ENCODE measurements at regions of chr1 and their contacts with region 1.

Region 1: DNA sequence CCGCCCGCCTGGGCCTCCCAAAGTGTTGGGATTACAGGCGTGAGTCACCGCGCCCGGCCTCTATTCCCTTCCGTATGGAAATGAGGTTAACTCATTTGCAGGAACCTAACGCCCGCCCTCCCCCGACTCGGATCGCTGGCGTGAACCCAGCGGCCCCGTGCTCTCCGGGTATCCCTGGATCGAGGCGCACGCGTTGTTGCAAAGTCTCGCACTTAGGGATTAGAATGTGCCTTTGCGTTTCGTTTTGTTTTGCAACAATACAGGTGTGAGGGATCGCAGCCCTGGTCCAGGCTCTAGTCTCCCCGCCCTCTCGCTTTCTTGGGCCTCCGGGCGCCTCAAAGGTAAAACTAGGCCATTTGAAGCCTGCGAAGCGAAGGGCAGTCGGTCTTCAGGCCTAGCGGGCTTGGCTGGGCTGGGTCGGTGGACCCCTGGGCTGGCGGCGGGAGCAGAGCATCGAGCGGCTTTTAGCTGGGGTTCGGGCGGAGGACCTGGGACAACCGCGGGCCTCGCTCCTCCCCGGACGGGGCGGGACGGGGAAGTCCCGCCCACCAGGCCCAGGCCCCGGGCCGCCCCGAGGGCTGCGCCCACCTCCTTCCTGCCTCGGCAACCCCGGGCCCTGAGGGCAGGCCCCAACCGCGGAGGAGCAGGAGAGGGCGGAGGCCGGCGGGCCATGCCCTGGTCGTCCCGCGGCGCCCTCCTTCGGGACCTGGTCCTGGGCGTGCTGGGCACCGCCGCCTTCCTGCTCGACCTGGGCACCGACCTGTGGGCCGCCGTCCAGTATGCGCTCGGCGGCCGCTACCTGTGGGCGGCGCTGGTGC is at the start of gene XKR8:
- H3K4me3 ChIP-seq: peak within 1 kb of the TSS; percentile 77
- H3K27ac ChIP-seq: peak within 1 kb of the TSS; percentile 75
- H3K4me1 ChIP-seq: no peaks in the 10 kb centered on the region
- CTCF ChIP-seq: peak; percentile 95

Region 2: DNA sequence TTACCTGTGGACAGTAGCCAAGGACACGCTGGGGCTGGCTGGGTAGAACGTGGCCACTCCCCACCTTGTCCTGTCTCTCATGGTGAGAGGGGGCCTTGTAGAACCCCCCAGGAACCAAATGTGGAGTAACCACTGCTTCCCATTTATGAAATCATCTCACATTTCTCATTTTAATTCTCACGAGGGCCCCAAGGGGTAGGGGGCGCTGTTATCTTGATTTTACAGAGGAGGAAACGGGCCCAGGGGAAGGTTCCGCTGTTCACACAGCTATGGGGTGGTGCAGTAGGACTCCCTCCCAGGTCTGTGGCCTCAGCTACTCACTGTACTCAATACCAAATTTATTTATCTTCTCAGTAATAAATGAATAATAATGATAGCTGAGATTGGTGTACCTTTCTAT is 19.3 kb before region 1 on chr1:
- CTCF ChIA-PET with region 1: interaction called, 32 read pairs
- POLR2A ChIA-PET with region 1: interaction called, 4 read pairs
- H3K4me3 ChIP-seq: no peak overlapping the region
- H3K27ac ChIP-seq: no peak overlapping the region
- H3K4me1 ChIP-seq: peaks cover under 1% of the 10 kb centered on the region; the same call in 1 of the 2 replicates
- CTCF ChIP-seq: no peak

Region 3: DNA sequence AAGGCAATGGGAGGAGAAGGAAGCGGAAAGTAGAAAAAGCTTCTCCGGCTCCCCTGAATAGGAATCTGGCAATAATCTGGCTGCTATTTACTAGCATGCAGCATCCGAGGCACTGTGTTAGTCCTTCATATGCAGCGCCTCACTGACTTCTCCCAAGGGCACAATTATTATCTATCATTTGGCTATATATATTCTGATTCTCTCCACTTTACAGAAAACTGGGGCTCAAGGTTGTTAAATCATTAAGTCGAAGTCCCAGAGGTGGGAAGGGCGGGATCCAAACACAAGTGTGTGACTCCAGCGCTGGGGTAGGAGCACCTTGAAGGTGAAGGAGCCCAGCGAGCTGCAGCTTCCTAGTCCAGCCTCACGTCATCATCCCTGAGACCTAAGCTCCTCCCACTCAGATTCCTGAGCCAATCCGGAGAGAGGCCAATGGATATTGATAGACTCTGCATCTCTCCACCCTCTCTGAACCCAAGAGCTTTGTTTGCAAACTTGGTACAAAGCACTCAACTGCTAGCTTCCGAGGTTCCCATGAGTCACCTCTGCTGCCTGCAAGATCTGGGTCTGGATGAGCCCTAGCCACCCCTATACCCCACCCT is 145.4 kb after region 1 on chr1:
- CTCF ChIA-PET with region 1: no interaction called
- POLR2A ChIA-PET with region 1: no interaction called
- H3K4me3 ChIP-seq: peak overlapping the region; percentile 8
- H3K27ac ChIP-seq: no peak overlapping the region
- H3K4me1 ChIP-seq: no peaks in the 10 kb centered on the region
- CTCF ChIP-seq: no peak

Measured in HEK293 (cell line).